HCT116 (cell line): ENCODE measurements at regions of chr20 and their contacts with region 1.

Region 1: DNA sequence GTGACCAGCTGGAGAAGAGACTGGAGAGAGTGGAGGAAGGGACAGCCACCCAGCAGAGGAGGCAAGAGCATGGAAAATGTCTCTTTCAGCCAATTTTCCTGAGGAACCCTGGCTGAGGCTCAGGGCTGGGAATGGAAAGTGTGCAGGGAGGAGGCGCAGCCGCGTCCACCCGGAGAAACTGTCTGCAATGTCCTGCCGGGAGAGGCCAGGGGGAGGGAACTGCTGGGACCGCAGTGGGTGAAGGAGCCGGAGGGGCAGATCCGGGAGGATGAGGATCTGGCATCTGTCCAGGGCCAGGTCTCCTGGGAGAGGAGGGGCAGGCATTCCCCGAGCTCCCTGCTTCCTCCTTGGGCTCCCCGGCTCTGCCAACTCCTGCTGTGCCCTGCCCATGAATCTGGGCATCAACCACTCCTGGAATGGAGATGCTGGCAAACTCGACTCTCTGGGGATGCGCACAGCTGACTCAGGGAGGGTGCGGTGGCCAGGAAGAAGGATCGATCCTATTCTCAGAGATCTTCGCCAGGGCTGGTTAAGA is 17.4 kb upstream of the HM13 start:
- DNase-seq: no peak
- ATAC-seq: no peak
- H3K4me3 ChIP-seq: no peak overlapping the region
- H3K27ac ChIP-seq: no peak overlapping the region
- H3K4me1 ChIP-seq: 0 out of 4 replicates have a peak, but pooled peaks cover 0 to 6% of the 10 kb centered on the region in 2 experiments
- H3K27me3 ChIP-seq: no peaks in the 10 kb centered on the region
- CTCF ChIP-seq: no peak
- POLR2A ChIP-seq: no peak
- RAD21 ChIP-seq: no peak

Region 2: DNA sequence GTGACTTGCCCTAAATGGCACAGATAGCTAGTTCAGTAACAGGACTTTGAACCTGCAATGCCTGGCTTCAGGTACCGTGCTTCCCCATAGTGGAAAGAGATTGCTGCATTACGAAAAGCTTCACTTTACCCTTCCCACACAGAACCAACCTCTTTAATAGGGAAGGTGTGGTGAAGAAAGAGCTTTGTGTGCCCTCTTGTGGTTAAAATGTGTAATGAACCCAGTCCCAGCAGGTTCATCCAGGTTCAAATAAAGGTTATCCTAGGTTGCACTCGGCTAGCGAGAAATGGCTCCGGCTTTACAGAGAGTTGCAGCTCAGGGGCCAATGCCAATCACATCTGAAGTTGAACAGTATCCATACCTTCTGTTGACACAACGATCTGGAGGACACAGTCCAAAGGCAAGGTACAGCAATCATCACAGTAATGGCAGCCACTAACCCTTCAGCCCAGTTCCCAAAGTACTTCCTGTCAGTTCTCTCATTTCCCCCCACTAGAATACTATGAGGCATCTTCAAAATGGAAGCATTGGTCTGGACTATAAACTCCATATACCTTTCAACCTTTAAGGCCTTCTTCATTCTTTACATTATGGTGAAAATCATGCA is 236.4 kb before region 1 on chr20:
- CTCF ChIA-PET with region 1: interaction called, 12 read pairs
- POLR2A ChIA-PET with region 1: no interaction called
- RAD21 ChIA-PET with region 1: no interaction called
- intact Hi-C with region 1: no loop called
- DNase-seq: peak; percentile 33
- ATAC-seq: peak; percentile 78
- H3K4me3 ChIP-seq: no peak overlapping the region
- H3K27ac ChIP-seq: no peak overlapping the region
- H3K4me1 ChIP-seq: no peaks in the 10 kb centered on the region
- H3K27me3 ChIP-seq: no peaks in the 10 kb centered on the region
- CTCF ChIP-seq: peak; percentile 18 to 75 (median 72); a peak in 4 of 6 replicates
- POLR2A ChIP-seq: no peak
- RAD21 ChIP-seq: peak; percentile 54

Region 3: GRCh38 chr20:31414380-31414779 is 82.4 kb before region 1 on chr20:
- CTCF ChIA-PET with region 1: interaction called, 28 read pairs
- POLR2A ChIA-PET with region 1: no interaction called
- RAD21 ChIA-PET with region 1: no interaction called
- intact Hi-C with region 1: no loop called
- DNase-seq: no peak
- ATAC-seq: no peak
- H3K4me3 ChIP-seq: no peak overlapping the region
- H3K27ac ChIP-seq: no peak overlapping the region
- H3K4me1 ChIP-seq: no peaks in the 10 kb centered on the region
- H3K27me3 ChIP-seq: peaks cover 15% of the 10 kb centered on the region; the same call in 1 of the 2 replicates
- CTCF ChIP-seq: no peak
- POLR2A ChIP-seq: no peak
- RAD21 ChIP-seq: no peak

Region 4: GRCh38 chr20:31523361-31524283 is 26.8 kb after region 1 on chr20:
- CTCF ChIA-PET with region 1: no interaction called
- POLR2A ChIA-PET with region 1: no interaction called
- RAD21 ChIA-PET with region 1: no interaction called
- intact Hi-C with region 1: no loop called
- DNase-seq: no peak
- ATAC-seq: no peak; the same call in 1 of the 2 replicates
- H3K4me3 ChIP-seq: no peak overlapping the region
- H3K27ac ChIP-seq: no peak overlapping the region
- H3K4me1 ChIP-seq: no peaks in the 10 kb centered on the region
- H3K27me3 ChIP-seq: no peaks in the 10 kb centered on the region
- CTCF ChIP-seq: no peak
- POLR2A ChIP-seq: no peak
- RAD21 ChIP-seq: no peak

Region 5: GRCh38 chr20:31731321-31731717 is 234.5 kb after region 1 on chr20:
- CTCF ChIA-PET with region 1: no interaction called
- POLR2A ChIA-PET with region 1: no interaction called
- RAD21 ChIA-PET with region 1: no interaction called
- intact Hi-C with region 1: no loop called
- DNase-seq: no peak
- ATAC-seq: no peak
- H3K4me3 ChIP-seq: peak overlapping the region in 1 of 2 experiments; percentile 51; a peak in 3 of 4 replicates
- H3K27ac ChIP-seq: peak overlapping the region; percentile 40; the same call in 1 of the 2 replicates
- H3K4me1 ChIP-seq: peaks cover 18 to 35% of the 10 kb centered on the region in 2 experiments
- H3K27me3 ChIP-seq: no peaks in the 10 kb centered on the region
- CTCF ChIP-seq: no peak
- POLR2A ChIP-seq: no peak
- RAD21 ChIP-seq: no peak

Region 6: GRCh38 chr20:31923388-31924331 is 426.8 kb after region 1 on chr20:
- CTCF ChIA-PET with region 1: no interaction called
- POLR2A ChIA-PET with region 1: no interaction called
- RAD21 ChIA-PET with region 1: no interaction called
- intact Hi-C with region 1: no loop called
- DNase-seq: no peak
- ATAC-seq: no peak
- H3K4me3 ChIP-seq: no peak overlapping the region
- H3K27ac ChIP-seq: no peak overlapping the region
- H3K4me1 ChIP-seq: no peaks in the 10 kb centered on the region
- H3K27me3 ChIP-seq: no peaks in the 10 kb centered on the region
- CTCF ChIP-seq: no peak
- POLR2A ChIP-seq: no peak
- RAD21 ChIP-seq: no peak